Calu3 (cell line): ENCODE measurements at regions of chr6 and their contacts with region 1.

Region 1: DNA sequence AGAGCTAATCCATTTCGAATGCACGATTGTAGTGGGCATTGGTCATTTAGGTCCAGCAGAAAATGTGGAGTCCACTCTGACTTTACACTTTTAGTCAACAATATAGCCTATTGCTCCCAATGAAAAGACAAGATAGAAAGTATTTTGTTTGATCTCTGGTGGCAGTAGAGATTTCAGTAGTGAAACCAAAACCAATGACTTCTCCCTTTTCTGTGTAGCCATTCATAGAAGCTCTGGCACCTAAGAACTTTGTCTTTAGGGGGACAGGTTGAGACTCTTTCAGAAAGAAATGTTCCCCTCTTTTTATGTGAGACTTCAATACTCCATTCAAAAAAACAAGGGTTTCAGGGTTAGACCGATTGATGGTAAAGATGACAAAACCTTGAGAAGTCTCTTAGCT is 510.8 kb upstream of the POU3F2 start:
- DNase-seq: no peak
- H3K4me3 Mint-ChIP-seq: no peak overlapping the region
- H3K27ac Mint-ChIP-seq: no peak overlapping the region
- H3K4me1 Mint-ChIP-seq: no peaks in the 10 kb centered on the region
- H3K27me3 Mint-ChIP-seq: no peaks in the 10 kb centered on the region
- CTCF ChIP-seq: no peak

Region 2: DNA sequence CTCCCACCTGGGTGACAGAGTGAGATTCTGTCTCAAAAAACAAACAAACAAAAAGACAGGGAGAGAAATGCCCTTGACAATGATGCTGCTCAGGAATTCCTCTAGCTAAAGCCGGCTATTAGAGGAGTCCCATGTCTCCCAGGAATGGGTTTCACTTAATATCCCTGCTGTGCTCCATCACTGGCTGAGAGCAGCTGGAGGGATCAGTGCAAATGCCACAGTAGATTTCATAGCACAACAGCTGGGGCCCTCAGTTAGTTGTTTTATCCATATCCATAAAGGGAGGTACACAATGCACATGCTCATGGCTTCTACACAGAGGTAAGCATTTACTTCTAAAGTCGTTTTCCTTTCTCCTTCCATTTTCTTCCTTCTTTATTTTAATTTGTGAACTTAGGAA is 231.3 kb before region 1 on chr6:
- CTCF ChIA-PET with region 1: no interaction called
- intact Hi-C with region 1: no loop called
- DNase-seq: no peak
- H3K4me3 Mint-ChIP-seq: no peak overlapping the region
- H3K27ac Mint-ChIP-seq: no peak overlapping the region
- H3K4me1 Mint-ChIP-seq: no peaks in the 10 kb centered on the region
- H3K27me3 Mint-ChIP-seq: no peaks in the 10 kb centered on the region
- CTCF ChIP-seq: no peak

Region 3: DNA sequence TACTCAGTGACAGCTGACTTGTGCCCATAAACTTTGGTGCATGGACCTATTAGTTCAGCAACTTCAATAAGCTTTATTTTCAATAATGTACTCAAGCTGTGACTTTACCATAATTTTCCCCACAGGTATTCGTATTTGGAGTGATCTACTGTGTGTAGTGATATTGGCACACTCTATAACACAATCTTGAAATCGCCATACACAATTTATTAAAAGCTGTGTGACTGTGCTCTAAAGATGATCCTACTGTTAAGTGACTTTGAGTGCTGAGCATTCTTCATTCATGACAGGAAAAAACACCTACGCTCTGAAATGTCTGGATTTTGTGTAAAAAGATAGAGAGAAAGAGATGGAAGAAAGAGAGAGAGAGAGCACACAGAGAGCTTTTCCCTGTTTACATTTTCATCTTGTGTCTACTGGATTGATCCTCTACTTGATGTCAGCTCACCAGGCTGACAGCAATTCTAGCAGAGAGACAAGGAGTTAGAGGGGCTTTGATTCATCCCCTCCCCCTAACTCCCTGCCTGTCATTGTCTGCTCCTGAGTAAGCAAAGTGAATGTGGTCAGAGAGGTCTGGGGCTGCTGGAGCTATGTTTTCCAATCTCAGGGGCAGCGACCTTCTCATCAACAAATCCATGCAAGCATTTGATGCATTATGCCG is 28.0 kb before region 1 on chr6:
- CTCF ChIA-PET with region 1: no interaction called
- intact Hi-C with region 1: loop called (anchors 1 kb)
- DNase-seq: no peak
- H3K4me3 Mint-ChIP-seq: no peak overlapping the region
- H3K27ac Mint-ChIP-seq: no peak overlapping the region
- H3K4me1 Mint-ChIP-seq: peaks cover 7% of the 10 kb centered on the region
- H3K27me3 Mint-ChIP-seq: no peaks in the 10 kb centered on the region
- CTCF ChIP-seq: no peak